ENCODE measurements at regions of chr13 and their contacts with region 1.

Region 1: GRCh38 chr13:79749984-79750551 is 269.1 kb downstream of the NDFIP2 start:
- DNase-seq: peak; percentile 69
- H3K4me3 ChIP-seq: no peak overlapping the region
- H3K27ac ChIP-seq: peak overlapping the region; percentile 31
- H3K4me1 ChIP-seq: peaks cover 16% of the 10 kb centered on the region
- H3K27me3 ChIP-seq: no peaks in the 10 kb centered on the region
- CTCF ChIP-seq: no peak

Region 2: DNA sequence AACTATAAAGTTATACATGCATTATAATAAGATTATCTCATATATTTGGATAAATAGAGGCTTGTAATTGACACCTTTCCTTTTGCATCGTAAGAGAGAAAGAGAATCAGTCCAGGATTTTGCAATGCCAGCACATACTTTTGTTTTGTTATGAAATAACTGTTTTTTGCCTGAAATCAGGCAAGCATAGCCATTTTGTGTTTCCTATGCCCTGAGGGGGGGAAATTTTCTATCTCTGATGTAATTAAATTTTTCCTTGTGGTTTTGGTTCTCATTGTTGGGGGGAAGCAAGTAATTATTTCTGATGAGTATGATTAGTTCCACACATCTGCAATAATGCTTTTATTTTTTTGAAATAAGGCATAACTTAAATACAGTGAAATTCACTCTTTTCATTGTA is 39.7 kb before region 1 on chr13:
- CTCF ChIA-PET with region 1: no interaction called
- dilution Hi-C with region 1: no loop called
- in situ Hi-C with region 1: no loop called
- intact Hi-C with region 1: loop called (anchors 5 kb)
- DNase-seq: peak; percentile 69
- H3K4me3 ChIP-seq: no peak overlapping the region
- H3K27ac ChIP-seq: no peak overlapping the region
- H3K4me1 ChIP-seq: peaks cover 28% of the 10 kb centered on the region
- H3K27me3 ChIP-seq: no peaks in the 10 kb centered on the region
- CTCF ChIP-seq: no peak

Measured in mammary epithelial cell (primary cell).